Naive thymus-derived CD4-positive, alpha-beta T cell (primary cell): ENCODE measurements at regions of chrX and their contacts with region 1.

Region 1: DNA sequence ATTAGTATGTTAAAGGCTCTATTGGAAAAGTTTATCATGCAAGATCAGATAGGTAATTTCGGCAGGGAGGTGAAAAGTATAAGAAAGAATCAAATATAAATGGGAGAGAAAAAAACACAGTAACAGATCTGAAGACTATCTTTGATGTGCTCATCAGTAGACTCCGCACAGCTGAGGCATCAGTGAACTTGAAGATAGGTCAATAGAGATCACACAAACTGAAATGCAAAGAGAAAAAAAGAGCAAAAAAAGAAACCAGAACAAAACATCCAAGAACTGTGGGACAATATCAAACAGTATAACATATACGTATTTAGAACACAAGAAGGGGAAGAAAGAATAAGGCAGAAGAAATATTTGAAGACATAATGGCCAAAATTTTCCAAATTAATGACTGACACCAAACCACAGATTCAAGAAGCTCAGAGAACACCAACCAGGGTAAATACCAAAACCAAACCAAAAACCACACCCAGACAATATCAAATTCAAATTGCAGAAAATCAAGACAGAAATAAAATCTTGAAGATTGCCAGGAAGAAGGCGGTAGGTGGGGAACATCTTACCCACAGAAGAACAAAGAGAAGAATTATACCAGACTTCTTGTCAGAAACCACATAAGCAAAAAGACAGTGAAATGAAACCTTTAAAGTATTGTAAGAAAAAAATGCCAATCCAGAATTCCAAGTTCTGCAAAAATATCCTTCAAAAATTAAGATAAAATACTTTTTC is 29.1 kb downstream of the PFKFB1 start:
- DNase-seq: peak in 7 of 9 donors; percentile 9 to 67 (median 54)
- ATAC-seq: peak; percentile 70
- H3K4me3 ChIP-seq: no peak overlapping the region
- H3K4me3 Mint-ChIP-seq: peak overlapping the region in 9 of 10 donors; percentile 12 to 83 (median 55)
- H3K27ac ChIP-seq: no peak overlapping the region
- H3K27ac Mint-ChIP-seq: peak overlapping the region in 7 of 9 donors; percentile 61 to 90 (median 79)
- H3K4me1 ChIP-seq: peaks cover 0 to 20% of the 10 kb centered on the region in 2 donors
- H3K4me1 Mint-ChIP-seq: peaks cover 6 to 60% (median 46%) of the 10 kb centered on the region in 7 donors
- H3K27me3 ChIP-seq: no peaks in the 10 kb centered on the region
- H3K27me3 Mint-ChIP-seq: peaks cover 0 to 3% (median 0%) of the 10 kb centered on the region in 5 donors

Region 2: DNA sequence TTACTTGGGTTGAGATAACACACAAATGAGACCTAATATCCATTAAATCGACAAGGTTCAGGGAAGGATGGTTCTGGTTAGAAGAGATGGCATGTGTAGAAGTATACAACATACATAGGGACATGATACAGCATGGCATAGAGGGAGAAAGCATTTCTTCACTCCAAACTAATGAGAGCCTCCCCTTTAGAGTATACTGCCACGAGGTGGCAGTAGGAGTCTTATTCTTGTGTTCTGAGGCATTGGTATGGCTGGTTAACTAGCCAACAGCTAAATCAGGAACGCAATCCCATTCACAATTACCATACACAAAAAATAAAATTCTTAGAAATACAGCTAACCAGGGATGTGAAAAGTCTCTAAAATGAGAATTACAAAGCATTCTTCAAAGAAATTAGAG is 73.4 kb before region 1 on chrX:
- CTCF ChIA-PET with region 1: no interaction called
- POLR2A ChIA-PET with region 1: no interaction called
- intact Hi-C with region 1: loop called in 1 of 2 experiments (anchors 5 kb)
- DNase-seq: peak in 7 of 9 donors; percentile 11 to 54 (median 40)
- ATAC-seq: peak; percentile 60
- H3K4me3 ChIP-seq: no peak overlapping the region
- H3K4me3 Mint-ChIP-seq: no peak overlapping the region
- H3K27ac ChIP-seq: no peak overlapping the region
- H3K27ac Mint-ChIP-seq: no peak overlapping the region
- H3K4me1 ChIP-seq: no peaks in the 10 kb centered on the region
- H3K4me1 Mint-ChIP-seq: peaks cover 0 to 1% (median 0%) of the 10 kb centered on the region in 7 donors
- H3K27me3 ChIP-seq: no peaks in the 10 kb centered on the region
- H3K27me3 Mint-ChIP-seq: peaks cover 0 to 9% (median 4%) of the 10 kb centered on the region in 5 donors

Region 3: DNA sequence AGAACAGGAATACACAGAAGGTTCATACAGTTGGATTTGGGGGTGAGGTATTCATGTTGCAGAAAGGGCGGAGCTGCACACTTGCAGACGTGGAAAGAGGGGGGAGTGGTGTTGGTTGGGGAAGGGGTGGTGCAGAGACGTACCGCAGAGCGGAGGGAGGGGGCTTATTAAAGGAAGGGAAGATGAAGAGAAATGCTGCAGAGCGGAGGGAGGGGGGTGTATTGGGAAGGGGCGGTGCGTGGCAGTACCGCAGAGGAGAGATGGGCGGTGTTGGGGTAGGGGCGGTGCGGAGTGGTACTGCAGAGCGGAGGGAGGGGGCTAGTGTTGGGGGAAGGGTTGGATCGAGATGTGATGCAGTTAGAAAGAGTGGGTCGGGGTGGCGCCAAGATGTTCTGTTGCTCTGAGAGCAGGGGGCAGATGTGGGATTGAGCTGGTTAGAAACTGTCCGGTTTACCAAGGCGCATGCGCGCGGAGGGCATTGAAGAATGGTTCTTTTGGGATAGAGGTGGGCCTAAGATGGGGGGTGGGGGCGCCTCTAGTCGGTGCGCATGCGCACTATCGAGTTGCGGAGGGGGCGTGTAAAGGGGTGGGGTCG is 43.4 kb before region 1 on chrX:
- CTCF ChIA-PET with region 1: no interaction called
- POLR2A ChIA-PET with region 1: no interaction called
- intact Hi-C with region 1: loop called in 1 of 2 experiments (anchors 2 kb)
- DNase-seq: peak; percentile 18 to 61 (median 34)
- ATAC-seq: peak; percentile 85
- H3K4me3 ChIP-seq: peak overlapping the region; percentile 71
- H3K4me3 Mint-ChIP-seq: peak overlapping the region; percentile 79 to 96 (median 92)
- H3K27ac ChIP-seq: peak overlapping the region; percentile 42
- H3K27ac Mint-ChIP-seq: peak overlapping the region; percentile 12 to 94 (median 84)
- H3K4me1 ChIP-seq: peaks cover 0 to 9% of the 10 kb centered on the region in 2 donors
- H3K4me1 Mint-ChIP-seq: peaks cover 11 to 23% (median 16%) of the 10 kb centered on the region in 7 donors
- H3K27me3 ChIP-seq: no peaks in the 10 kb centered on the region
- H3K27me3 Mint-ChIP-seq: peaks cover 0 to 13% (median 0%) of the 10 kb centered on the region in 5 donors